ENCODE measurements at regions of chr7 and their contacts with region 1.

Region 1: GRCh38 chr7:124784879-124785818 is 19.6 kb upstream of the GPR37 start:
- H3K4me3 ChIP-seq: no peak overlapping the region
- H3K27ac ChIP-seq: no peak overlapping the region
- H3K4me1 ChIP-seq: no peaks in the 10 kb centered on the region
- CTCF ChIP-seq: peak; percentile 51; the same call in 1 of the 2 replicates

Region 2: GRCh38 chr7:124152859-124153692 is 632.1 kb before region 1 on chr7:
- CTCF ChIA-PET with region 1: interaction called, 30 read pairs
- POLR2A ChIA-PET with region 1: no interaction called
- H3K4me3 ChIP-seq: no peak overlapping the region
- H3K27ac ChIP-seq: no peak overlapping the region
- H3K4me1 ChIP-seq: no peaks in the 10 kb centered on the region
- CTCF ChIP-seq: no peak

Region 3: GRCh38 chr7:124171068-124171467 is 614.1 kb before region 1 on chr7:
- CTCF ChIA-PET with region 1: interaction called, 11 read pairs
- POLR2A ChIA-PET with region 1: no interaction called
- H3K4me3 ChIP-seq: no peak overlapping the region
- H3K27ac ChIP-seq: no peak overlapping the region
- H3K4me1 ChIP-seq: no peaks in the 10 kb centered on the region
- CTCF ChIP-seq: 0 out of 2 replicates have a peak, but pooled peaks have one; percentile 19